ENCODE measurements at regions of chr17 and their contacts with region 1.

Region 1: DNA sequence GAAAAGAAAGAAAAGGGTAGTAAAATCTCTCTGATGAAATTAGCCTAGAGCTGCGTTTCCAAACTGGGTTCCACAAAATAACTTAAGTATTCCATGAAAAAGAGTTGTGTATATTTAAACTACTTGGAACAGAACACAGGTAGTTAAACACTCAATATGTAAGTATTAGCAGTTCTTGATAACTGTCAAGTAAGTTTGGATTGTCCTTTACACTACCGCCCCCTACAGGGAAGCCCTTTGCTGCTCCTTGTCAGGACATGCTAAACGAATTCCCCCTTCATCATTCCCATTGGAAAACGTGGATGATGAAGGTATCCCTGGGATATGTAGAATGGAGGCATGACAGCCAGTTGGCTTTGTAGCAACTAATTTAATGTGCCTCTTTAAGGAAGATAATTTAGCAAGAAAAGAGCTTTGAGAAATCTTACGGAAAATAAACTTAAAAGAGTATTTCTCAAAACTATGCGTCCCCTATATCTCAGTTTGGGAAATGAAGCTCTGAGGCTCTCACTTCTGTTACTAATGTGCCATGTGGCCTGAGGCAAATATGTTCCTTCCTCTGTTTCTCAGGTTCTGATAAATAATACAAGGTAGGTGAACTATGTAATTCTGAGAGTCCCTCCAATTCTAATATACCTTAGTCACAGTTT is 18.8 kb downstream of the NCBP3 start:
- DNase-seq: peak; percentile 61
- H3K4me3 ChIP-seq: no peak overlapping the region
- H3K27ac ChIP-seq: no peak overlapping the region
- H3K4me1 ChIP-seq: no peaks in the 10 kb centered on the region
- H3K27me3 ChIP-seq: no peaks in the 10 kb centered on the region
- CTCF ChIP-seq: peak; percentile 86
- EP300 ChIP-seq: no peak
- RAD21 ChIP-seq: peak; percentile 69

Region 2: DNA sequence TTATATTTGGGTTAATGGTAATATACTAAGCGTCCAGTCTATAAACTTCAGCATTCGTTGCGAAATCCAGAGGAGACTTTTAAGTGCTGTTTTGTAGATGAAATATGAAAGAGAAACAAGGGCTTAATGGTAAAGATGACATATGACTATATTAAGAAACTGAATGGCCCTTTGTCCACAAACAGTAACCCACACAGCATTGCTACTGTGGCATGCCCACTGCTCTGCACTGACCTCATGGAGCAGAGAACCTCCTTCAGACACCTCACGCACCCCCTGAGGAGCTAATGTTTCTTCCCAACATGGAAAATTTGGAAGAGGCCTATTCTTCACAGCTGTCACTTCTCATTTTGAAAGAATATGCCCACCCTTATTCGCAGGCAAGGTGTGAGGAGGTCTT is 324.8 kb before region 1 on chr17:
- CTCF ChIA-PET with region 1: no interaction called
- POLR2A ChIA-PET with region 1: no interaction called
- DNase-seq: no peak
- H3K4me3 ChIP-seq: no peak overlapping the region
- H3K27ac ChIP-seq: no peak overlapping the region
- H3K4me1 ChIP-seq: no peaks in the 10 kb centered on the region
- H3K27me3 ChIP-seq: peaks cover 25% of the 10 kb centered on the region
- CTCF ChIP-seq: no peak
- EP300 ChIP-seq: no peak
- RAD21 ChIP-seq: no peak

Region 3: GRCh38 chr17:3812771-3813170 is 14.5 kb before region 1 on chr17:
- CTCF ChIA-PET with region 1: interaction called, 20 read pairs
- POLR2A ChIA-PET with region 1: no interaction called
- DNase-seq: no peak
- H3K4me3 ChIP-seq: no peak overlapping the region
- H3K27ac ChIP-seq: no peak overlapping the region
- H3K4me1 ChIP-seq: no peaks in the 10 kb centered on the region
- H3K27me3 ChIP-seq: no peaks in the 10 kb centered on the region
- CTCF ChIP-seq: no peak
- EP300 ChIP-seq: no peak
- RAD21 ChIP-seq: no peak

Region 4: DNA sequence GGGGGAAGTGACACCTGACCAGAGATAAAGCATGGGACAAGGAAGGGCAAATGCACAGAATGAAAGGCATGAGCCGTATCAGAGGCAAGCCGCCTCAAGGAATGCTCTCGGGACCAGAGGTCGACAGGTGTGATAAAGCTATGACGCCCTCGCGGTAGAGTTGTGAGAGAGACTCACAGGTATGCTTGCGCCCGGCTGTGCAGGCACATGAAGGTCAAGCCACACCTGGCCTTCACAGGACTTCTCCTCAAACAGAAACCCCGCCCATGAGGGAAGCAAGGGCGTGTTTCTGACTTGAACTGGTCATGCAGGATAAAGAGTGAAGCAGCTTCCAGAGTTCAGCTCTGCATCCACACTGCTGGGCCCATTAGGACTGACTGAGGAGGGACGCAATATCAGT is 11.0 kb after region 1 on chr17:
- CTCF ChIA-PET with region 1: interaction called, 37 read pairs
- POLR2A ChIA-PET with region 1: interaction called, 3 read pairs
- DNase-seq: no peak
- H3K4me3 ChIP-seq: no peak overlapping the region
- H3K27ac ChIP-seq: no peak overlapping the region; a peak in 1 of 4 replicates
- H3K4me1 ChIP-seq: no peaks in the 10 kb centered on the region
- H3K27me3 ChIP-seq: no peaks in the 10 kb centered on the region
- CTCF ChIP-seq: no peak
- EP300 ChIP-seq: no peak
- RAD21 ChIP-seq: no peak

Measured in SK-N-SH (cell line).